SK-N-SH (cell line): ENCODE measurements at regions of chr1 and their contacts with region 1.

Region 1: GRCh38 chr1:76154206-76154956 is 79.8 kb downstream of the ST6GALNAC3 start:
- DNase-seq: peak; percentile 73
- H3K4me3 ChIP-seq: peak overlapping the region; percentile 35 to 49
- H3K27ac ChIP-seq: peak overlapping the region; percentile 35 to 77
- H3K4me1 ChIP-seq: peaks cover 7 to 9% of the 10 kb centered on the region in 2 experiments; a peak in 2 of 4 replicates
- H3K27me3 ChIP-seq: no peaks in the 10 kb centered on the region
- CTCF ChIP-seq: peak; percentile 97
- EP300 ChIP-seq: no peak
- RAD21 ChIP-seq: peak; percentile 99

Region 2: GRCh38 chr1:76317299-76317900 is 163.0 kb after region 1 on chr1:
- CTCF ChIA-PET with region 1: interaction called, 10 read pairs
- POLR2A ChIA-PET with region 1: no interaction called
- DNase-seq: no peak
- H3K4me3 ChIP-seq: no peak overlapping the region
- H3K27ac ChIP-seq: no peak overlapping the region
- H3K4me1 ChIP-seq: peaks cover 2 to 6% of the 10 kb centered on the region in 2 experiments; a peak in 2 of 4 replicates
- H3K27me3 ChIP-seq: no peaks in the 10 kb centered on the region
- CTCF ChIP-seq: no peak
- EP300 ChIP-seq: no peak
- RAD21 ChIP-seq: no peak

Region 3: DNA sequence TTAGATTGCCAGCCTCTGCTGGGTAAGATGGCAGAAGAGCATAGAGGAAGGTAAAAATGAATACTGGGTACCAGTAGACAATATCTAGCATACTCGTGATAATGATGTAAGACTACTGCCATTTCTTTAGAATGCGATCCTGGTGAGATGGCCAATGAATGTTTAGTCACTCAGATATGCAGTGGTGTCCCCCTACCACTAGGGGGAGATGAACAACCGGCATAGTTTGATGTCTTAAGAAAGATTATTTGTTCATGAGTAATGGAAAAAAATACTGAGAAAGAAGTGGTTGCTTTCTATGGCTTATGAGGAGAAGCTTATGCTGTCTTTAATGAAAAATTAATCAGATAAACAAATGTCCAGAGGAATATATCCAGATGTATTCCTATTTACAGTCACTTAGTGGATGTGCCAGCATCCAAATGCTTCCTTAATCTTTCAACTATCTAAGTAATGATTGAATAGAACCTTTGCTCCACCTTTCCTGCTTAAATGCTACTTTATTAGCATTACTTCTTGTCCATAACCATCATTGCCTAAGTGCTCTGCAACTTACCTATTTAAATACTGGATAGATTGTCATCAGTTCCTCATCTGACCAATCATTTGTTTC is 176.7 kb after region 1 on chr1:
- CTCF ChIA-PET with region 1: interaction called, 13 read pairs
- POLR2A ChIA-PET with region 1: no interaction called
- DNase-seq: peak; percentile 16
- H3K4me3 ChIP-seq: no peak overlapping the region; a peak in 1 of 4 replicates
- H3K27ac ChIP-seq: no peak overlapping the region
- H3K4me1 ChIP-seq: peaks cover 0 to 6% of the 10 kb centered on the region in 2 experiments; a peak in 2 of 4 replicates
- H3K27me3 ChIP-seq: no peaks in the 10 kb centered on the region
- CTCF ChIP-seq: peak; percentile 95
- EP300 ChIP-seq: no peak
- RAD21 ChIP-seq: peak; percentile 89

Region 4: GRCh38 chr1:76868154-76868882 is 713.9 kb after region 1 on chr1:
- CTCF ChIA-PET with region 1: interaction called, 10 read pairs
- POLR2A ChIA-PET with region 1: no interaction called
- DNase-seq: peak; percentile 88
- H3K4me3 ChIP-seq: peak overlapping the region; percentile 89 to 93
- H3K27ac ChIP-seq: peak overlapping the region; percentile 61 to 88; a peak in 3 of 4 replicates
- H3K4me1 ChIP-seq: peaks cover 5 to 10% of the 10 kb centered on the region in 2 experiments; a peak in 3 of 4 replicates
- H3K27me3 ChIP-seq: no peaks in the 10 kb centered on the region
- CTCF ChIP-seq: peak; percentile 48
- EP300 ChIP-seq: no peak
- RAD21 ChIP-seq: peak; percentile 35

Region 5: GRCh38 chr1:77120950-77121349 is 966.6 kb after region 1 on chr1:
- CTCF ChIA-PET with region 1: interaction called, 60 read pairs
- POLR2A ChIA-PET with region 1: interaction called, 3 read pairs
- DNase-seq: no peak
- H3K4me3 ChIP-seq: no peak overlapping the region
- H3K27ac ChIP-seq: no peak overlapping the region; a peak in 1 of 4 replicates
- H3K4me1 ChIP-seq: peaks cover 0 to 6% of the 10 kb centered on the region in 2 experiments; a peak in 2 of 4 replicates
- H3K27me3 ChIP-seq: no peaks in the 10 kb centered on the region
- CTCF ChIP-seq: no peak
- EP300 ChIP-seq: no peak
- RAD21 ChIP-seq: no peak

Region 6: DNA sequence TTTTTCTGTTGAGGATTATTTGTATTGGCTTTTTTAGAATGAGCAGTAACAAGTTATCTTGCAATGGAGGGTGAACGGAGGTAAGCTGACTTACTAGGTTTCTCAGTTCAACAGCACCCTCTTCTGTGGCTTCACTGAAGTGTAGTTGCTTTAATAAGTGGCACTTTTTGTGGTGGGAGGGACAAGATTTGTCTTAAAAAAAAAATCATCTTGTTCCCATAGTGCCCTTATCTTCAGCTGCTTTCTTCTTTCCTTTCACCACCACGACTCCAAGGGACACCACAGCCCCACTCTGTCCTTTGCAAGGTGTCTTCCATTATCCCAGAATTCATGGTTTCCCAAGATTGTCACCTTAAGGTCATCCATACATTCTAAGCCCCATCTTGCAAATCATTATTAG is 971.9 kb after region 1 on chr1:
- CTCF ChIA-PET with region 1: interaction called, 60 read pairs
- POLR2A ChIA-PET with region 1: interaction called, 3 read pairs
- DNase-seq: peak; percentile 56
- H3K4me3 ChIP-seq: peak overlapping the region in 1 of 2 experiments; percentile 5; a peak in 1 of 4 replicates
- H3K27ac ChIP-seq: no peak overlapping the region
- H3K4me1 ChIP-seq: no peaks in the 10 kb centered on the region; a peak in 2 of 4 replicates
- H3K27me3 ChIP-seq: no peaks in the 10 kb centered on the region
- CTCF ChIP-seq: peak; percentile 84
- EP300 ChIP-seq: no peak
- RAD21 ChIP-seq: peak; percentile 96

Region 7: DNA sequence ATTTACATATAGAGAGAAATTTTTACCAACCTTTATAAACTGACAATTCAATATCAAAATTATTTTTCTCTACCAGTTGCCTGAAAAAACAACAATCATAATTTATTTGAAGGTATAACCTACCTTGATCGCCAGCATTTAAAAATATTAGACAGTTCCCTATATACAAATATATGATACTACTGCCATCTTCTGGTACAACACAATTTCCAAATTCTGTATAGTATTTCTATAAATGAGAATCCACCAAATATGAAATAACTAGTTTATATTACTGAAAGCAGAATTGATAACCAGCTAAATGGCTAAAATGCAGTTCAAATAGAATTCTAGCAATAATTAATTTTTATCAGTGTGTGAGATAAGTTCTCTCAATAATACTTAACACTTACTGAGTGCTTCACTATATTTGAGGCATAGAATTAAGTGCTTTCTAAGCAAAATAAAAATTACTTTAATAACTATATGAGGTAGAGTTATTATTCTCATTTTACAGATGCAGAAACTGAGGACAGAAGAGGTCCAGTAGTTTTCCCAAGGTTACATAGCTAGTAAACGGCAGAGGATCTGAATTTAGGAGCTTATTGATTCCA is 989.2 kb after region 1 on chr1:
- CTCF ChIA-PET with region 1: interaction called, 33 read pairs
- POLR2A ChIA-PET with region 1: no interaction called
- DNase-seq: peak; percentile 15
- H3K4me3 ChIP-seq: no peak overlapping the region
- H3K27ac ChIP-seq: no peak overlapping the region
- H3K4me1 ChIP-seq: no peaks in the 10 kb centered on the region
- H3K27me3 ChIP-seq: no peaks in the 10 kb centered on the region
- CTCF ChIP-seq: peak; percentile 75
- EP300 ChIP-seq: no peak
- RAD21 ChIP-seq: peak; percentile 66